ENCODE measurements at regions of chr19 and their contacts with region 1.

Region 1: GRCh38 chr19:29804493-29804892 is 7.3 kb upstream of the CCNE1 start:
- DNase-seq: no peak
- H3K4me3 ChIP-seq: no peak overlapping the region
- H3K27ac ChIP-seq: no peak overlapping the region
- H3K27me3 ChIP-seq: no peaks in the 10 kb centered on the region
- CTCF ChIP-seq: no peak

Region 2: GRCh38 chr19:29771708-29772414 is 32.6 kb before region 1 on chr19:
- intact Hi-C with region 1: loop called in 1 of 2 experiments (anchors 5 kb)
- DNase-seq: peak in 8 of 10 donors; percentile 33 to 68 (median 46)
- H3K4me3 ChIP-seq: no peak overlapping the region
- H3K27ac ChIP-seq: peak overlapping the region in 1 of 59 donors; percentile 18
- H3K27me3 ChIP-seq: no peaks in the 10 kb centered on the region
- CTCF ChIP-seq: peak in 55 of 56 donors; percentile 31 to 77 (median 64)

Measured in dorsolateral prefrontal cortex (tissue), 120 donors.